A549 (cell line): ENCODE measurements at regions of chr12 and their contacts with region 1.

Region 1: DNA sequence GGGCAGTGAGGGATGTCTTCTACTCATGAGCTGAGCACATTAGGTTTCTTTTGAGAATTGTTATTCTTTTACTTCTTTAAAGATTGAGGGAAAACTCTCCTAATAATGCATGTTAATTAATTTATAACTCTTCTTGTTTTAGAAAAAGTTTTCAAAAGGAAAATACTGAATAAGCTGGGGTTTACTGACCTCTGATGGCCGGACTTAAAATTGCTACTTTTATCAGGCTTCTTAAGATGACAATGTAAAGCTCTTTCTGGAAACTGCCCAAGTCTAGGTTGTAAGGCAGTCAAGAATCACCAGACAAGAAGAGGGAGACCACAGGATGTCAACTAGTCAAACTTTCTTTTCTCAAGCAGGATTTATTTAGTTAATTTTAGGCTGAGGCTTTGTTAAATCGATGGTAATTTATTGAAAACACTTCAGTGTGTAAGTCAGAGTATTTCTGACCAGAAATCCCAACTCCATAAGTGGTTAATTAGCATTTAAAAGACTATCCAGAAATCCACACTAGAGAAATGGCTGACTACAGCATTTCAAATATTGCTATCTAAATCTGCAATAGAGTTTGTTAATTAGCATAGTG is 82.1 kb downstream of the AVPR1A start:
- DNase-seq: peak; percentile 14 to 71
- ATAC-seq: peak; percentile 63 to 83; a peak in 3 of 6 replicates
- H3K4me3 ChIP-seq: no peak overlapping the region
- H3K27ac ChIP-seq: no peak overlapping the region
- H3K4me1 ChIP-seq: no peaks in the 10 kb centered on the region
- CTCF ChIP-seq: peak; percentile 84
- EP300 ChIP-seq: no peak
- POLR2A ChIP-seq: no peak
- RAD21 ChIP-seq: peak; percentile 84 to 86

Region 2: DNA sequence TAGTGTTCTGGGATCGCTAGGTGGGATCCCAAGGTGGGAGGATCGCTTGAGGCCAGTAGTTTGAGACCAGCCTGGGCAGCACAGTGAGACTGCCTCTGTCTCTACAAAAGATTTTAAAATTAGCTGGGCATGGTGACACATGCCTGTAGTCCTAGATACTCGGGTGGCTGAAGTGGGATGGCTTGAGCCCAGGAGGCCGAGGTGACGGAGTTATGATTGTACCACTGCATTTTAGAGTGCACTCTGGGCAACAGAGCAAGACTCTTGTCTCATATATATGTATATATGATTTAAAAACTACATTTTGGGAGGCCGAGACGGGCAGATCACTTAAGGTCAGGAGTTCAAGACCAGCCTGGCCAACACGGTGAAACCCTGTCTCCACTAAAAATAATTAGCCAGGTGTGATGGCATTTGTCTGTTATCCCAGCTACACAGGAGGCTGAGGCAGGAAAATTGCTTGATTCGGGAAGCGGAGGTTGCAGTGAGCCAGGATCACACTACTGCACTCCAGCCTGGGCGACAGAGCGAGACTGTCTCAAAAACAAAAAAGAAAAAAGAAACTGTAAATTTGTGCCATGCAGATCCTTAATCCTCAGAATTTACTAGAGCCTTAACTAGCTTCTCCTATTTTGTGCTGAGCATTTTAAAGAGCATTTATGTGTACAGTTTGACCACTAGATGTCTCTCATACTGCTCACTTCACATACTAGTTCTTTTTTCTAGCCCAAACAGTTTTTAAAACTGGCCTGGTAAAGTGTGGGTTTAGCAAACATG is 487.5 kb before region 1 on chr12:
- CTCF ChIA-PET with region 1: interaction called, 10 read pairs
- POLR2A ChIA-PET with region 1: no interaction called
- DNase-seq: peak; percentile 40 to 74
- ATAC-seq: peak; percentile 85 to 94
- H3K4me3 ChIP-seq: no peak overlapping the region
- H3K27ac ChIP-seq: peak overlapping the region; percentile 20 to 77
- H3K4me1 ChIP-seq: peaks cover 27% of the 10 kb centered on the region
- CTCF ChIP-seq: peak; percentile 83
- EP300 ChIP-seq: no peak
- POLR2A ChIP-seq: no peak
- RAD21 ChIP-seq: peak; percentile 88 to 90

Region 3: DNA sequence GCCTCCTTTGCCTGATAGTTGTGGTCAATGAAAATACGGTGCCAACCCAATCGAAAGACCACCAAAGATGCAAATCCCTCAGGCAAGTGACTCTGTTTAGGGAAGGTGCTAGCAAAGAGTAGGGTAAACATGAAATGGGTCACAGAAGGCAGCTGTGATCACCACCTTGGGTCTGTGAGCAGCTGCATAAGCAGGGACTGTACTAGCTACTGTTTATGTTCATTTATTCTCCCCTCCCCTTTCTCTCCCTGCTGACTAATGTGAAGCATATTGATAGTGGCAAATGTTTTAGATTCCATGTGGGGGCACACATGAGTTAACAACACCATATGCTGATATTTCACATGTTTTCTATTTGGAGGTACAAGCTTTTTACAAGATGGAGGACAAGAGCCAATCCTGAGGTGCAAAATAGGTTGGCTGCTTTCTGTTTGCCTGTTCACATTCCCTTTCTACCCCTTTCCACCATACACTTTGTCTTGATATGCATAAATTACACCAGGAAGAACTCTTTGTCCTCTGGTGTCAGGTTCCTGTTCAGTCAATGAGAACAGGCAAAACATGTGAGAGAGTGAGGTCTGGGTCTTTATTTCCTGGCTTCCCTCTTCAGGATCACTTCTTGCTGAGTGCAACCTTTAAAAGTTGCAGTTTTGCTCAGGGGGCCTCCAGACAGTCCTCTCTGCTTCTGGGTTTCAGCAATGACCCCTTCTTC is 11.0 kb after region 1 on chr12:
- CTCF ChIA-PET with region 1: interaction called, 10 read pairs
- POLR2A ChIA-PET with region 1: no interaction called
- DNase-seq: no peak
- ATAC-seq: no peak
- H3K4me3 ChIP-seq: no peak overlapping the region
- H3K27ac ChIP-seq: no peak overlapping the region
- H3K4me1 ChIP-seq: no peaks in the 10 kb centered on the region
- CTCF ChIP-seq: no peak
- EP300 ChIP-seq: no peak
- POLR2A ChIP-seq: no peak
- RAD21 ChIP-seq: no peak

Region 4: GRCh38 chr12:63779498-63780481 is 710.8 kb after region 1 on chr12 and contains the start of gene RXYLT1:
- CTCF ChIA-PET with region 1: no interaction called
- POLR2A ChIA-PET with region 1: no interaction called
- DNase-seq: peak; percentile 74 to 85
- ATAC-seq: peak; percentile 96 to 98
- H3K4me3 ChIP-seq: peak within 1 kb of the TSS; percentile 58
- H3K27ac ChIP-seq: peak within 1 kb of the TSS; percentile 88 to 98
- H3K4me1 ChIP-seq: peaks cover 15% of the 10 kb centered on the region; the same call in 2 of the 3 replicates
- CTCF ChIP-seq: no peak
- EP300 ChIP-seq: no peak
- POLR2A ChIP-seq: peak; percentile 95
- RAD21 ChIP-seq: no peak
- polyA plus RNA-seq, gene RXYLT1: 48.1 and 59.1 TPM in 2 replicates